ENCODE measurements at regions of chr10 and their contacts with region 1.

Region 1: DNA sequence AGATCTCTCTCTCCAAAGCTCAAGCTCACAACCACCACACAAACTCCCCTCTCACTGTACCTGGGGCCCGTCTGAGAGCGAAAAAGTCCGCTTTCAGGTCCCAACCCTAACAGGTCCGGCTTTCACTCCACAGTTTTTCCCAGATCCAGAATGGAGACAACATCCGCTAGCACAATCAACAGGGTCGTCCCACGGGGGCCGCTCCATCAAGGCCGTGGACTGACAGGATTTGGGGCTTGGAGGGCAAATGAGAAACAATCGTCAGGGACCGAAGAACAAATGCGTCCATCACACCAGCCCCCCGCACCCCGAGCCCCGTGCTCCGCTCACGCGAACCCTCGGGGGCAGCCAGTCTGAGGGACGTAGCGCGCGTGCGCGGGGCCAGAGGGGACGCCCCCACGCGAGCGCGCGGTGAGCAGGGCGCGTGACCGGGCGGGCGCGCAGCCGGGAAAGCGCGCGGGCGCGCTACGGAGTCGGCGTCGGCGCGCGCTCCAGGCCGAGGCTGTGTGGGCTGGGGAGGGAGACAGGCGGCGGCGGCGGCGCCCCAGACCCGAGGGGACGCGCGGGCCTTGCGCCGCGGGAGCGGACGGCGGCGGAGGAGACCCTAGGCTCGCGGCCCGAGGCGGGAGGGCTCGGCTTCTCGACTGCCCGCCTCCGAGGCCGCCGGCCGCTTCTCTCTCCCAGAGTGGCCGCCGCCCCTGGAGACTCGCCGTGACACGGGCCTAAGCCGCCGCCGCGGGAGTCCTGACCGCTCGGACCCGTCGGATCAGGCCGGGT is at the start of gene SLK:
- DNase-seq: peak; percentile 73 to 87
- ATAC-seq: peak; percentile 90
- total RNA-seq, gene SLK: 42.1 to 53.9 TPM

Region 2: GRCh38 chr10:103895411-103896186 is 71.3 kb before region 1 on chr10:
- intact Hi-C with region 1: loop called in 1 of 2 experiments (anchors 10 kb)
- DNase-seq: no peak
- ATAC-seq: no peak

Region 3: GRCh38 chr10:104099274-104099673 is 132.4 kb after region 1 on chr10:
- intact Hi-C with region 1: no loop called
- DNase-seq: no peak
- ATAC-seq: no peak

Region 4: GRCh38 chr10:104121520-104122224 is 154.8 kb after region 1 on chr10 and contains the start of gene SFR1:
- intact Hi-C with region 1: loop called in 1 of 2 experiments (anchors 10 kb)
- DNase-seq: peak; percentile 99
- ATAC-seq: peak; percentile 87
- total RNA-seq, gene SFR1: 3.4 to 5.6 TPM